Activated CD4-positive, alpha-beta memory T cell treated with anti-CD3 and anti-CD28 coated beads, Interleukin-2, amount 10 ng/mL, durations not matched to agents 7 days and 5 days (primary cell): ENCODE measurements at regions of chr1 and their contacts with region 1.

Region 1: GRCh38 chr1:67332653-67333529 is 25.2 kb downstream of the IL12RB2 start:
- DNase-seq: peak; percentile 48
- H3K4me3 Mint-ChIP-seq: peak overlapping the region; percentile 25
- H3K27ac Mint-ChIP-seq: peak overlapping the region; percentile 89
- H3K4me1 Mint-ChIP-seq: peaks cover 82% of the 10 kb centered on the region
- H3K27me3 Mint-ChIP-seq: no peaks in the 10 kb centered on the region

Region 2: DNA sequence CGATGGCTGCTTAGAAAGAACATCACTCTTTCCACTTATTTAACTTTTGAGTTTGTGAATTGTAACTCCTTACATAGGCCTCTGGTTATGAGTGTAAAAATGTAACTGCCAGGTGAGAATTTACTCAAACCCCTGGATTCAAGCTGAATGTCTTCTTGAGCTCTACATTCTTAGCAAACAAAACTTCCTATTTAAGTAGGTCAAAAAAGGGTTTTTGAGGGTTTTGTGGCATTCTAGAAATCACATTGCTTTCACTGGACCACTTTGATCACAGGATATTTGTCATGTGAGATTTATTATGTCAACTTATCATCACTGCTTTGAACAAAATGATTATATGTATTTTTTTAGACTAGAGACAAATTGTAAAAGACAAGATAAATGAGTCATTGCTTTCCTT is 160.9 kb before region 1 on chr1:
- CTCF ChIA-PET with region 1: no interaction called
- POLR2A ChIA-PET with region 1: interaction called, 11 read pairs
- DNase-seq: no peak
- H3K4me3 Mint-ChIP-seq: peak overlapping the region; percentile 55
- H3K27ac Mint-ChIP-seq: peak overlapping the region; percentile 82
- H3K4me1 Mint-ChIP-seq: peaks cover 68% of the 10 kb centered on the region
- H3K27me3 Mint-ChIP-seq: peaks cover 1% of the 10 kb centered on the region

Region 3: GRCh38 chr1:67250051-67250653 is 82.7 kb before region 1 on chr1:
- CTCF ChIA-PET with region 1: no interaction called
- POLR2A ChIA-PET with region 1: no interaction called
- DNase-seq: no peak
- H3K4me3 Mint-ChIP-seq: no peak overlapping the region
- H3K27ac Mint-ChIP-seq: no peak overlapping the region
- H3K4me1 Mint-ChIP-seq: no peaks in the 10 kb centered on the region
- H3K27me3 Mint-ChIP-seq: no peaks in the 10 kb centered on the region

Region 4: GRCh38 chr1:67307251-67308060 is 25.4 kb before region 1 on chr1 and contains the start of gene IL12RB2:
- CTCF ChIA-PET with region 1: interaction called, 3 read pairs
- POLR2A ChIA-PET with region 1: interaction called, 114 read pairs
- DNase-seq: peak; percentile 73
- H3K4me3 Mint-ChIP-seq: peak within 1 kb of the TSS; percentile 97
- H3K27ac Mint-ChIP-seq: peak within 1 kb of the TSS; percentile 94
- H3K4me1 Mint-ChIP-seq: peaks cover 72% of the 10 kb centered on the region
- H3K27me3 Mint-ChIP-seq: no peaks in the 10 kb centered on the region
- total RNA-seq, gene IL12RB2: 75.5 to 76.0 TPM

Region 5: DNA sequence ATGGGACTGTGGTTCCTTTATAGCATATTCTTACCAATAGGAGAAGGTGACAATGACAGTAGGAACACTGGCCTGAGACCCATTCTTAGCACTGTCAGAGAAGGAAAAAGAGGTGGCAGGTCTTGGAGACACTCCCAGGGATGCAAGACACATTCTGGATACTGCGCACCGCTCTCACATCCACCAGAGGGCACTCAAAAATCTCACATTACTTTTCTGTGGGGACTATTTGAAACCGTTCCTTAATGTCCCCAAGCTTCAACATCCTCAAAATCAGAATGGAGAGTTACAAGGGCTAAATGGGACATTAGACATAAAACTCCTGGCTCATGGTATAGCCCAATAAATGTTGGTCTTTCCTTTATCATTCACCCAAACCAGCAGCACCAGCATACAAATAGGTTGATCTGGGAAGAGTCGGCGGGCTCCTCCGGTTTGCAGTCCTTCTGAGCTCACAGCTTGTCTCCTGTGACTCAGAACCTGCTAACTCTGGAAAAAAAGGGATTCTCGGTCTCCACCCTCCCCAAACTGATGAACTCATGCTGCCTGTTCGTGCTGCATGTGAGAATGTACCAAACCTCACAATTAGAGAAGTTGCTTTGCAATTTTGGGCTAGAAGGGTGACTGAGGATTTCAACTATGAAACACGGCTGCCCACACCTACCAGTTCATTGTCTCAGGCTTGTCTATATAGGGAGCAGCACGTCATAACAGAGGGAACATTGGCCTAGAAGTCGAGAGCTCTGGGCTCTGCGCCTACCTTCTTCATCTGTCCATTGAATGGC is 15.0 kb after region 1 on chr1:
- CTCF ChIA-PET with region 1: interaction called, 32 read pairs
- POLR2A ChIA-PET with region 1: interaction called, 18 read pairs
- DNase-seq: no peak
- H3K4me3 Mint-ChIP-seq: no peak overlapping the region
- H3K27ac Mint-ChIP-seq: no peak overlapping the region
- H3K4me1 Mint-ChIP-seq: peaks cover 31% of the 10 kb centered on the region
- H3K27me3 Mint-ChIP-seq: no peaks in the 10 kb centered on the region

Region 6: GRCh38 chr1:67359592-67359991 is 26.7 kb after region 1 on chr1:
- CTCF ChIA-PET with region 1: no interaction called
- POLR2A ChIA-PET with region 1: no interaction called
- DNase-seq: no peak
- H3K4me3 Mint-ChIP-seq: no peak overlapping the region
- H3K27ac Mint-ChIP-seq: no peak overlapping the region
- H3K4me1 Mint-ChIP-seq: peaks cover 17% of the 10 kb centered on the region
- H3K27me3 Mint-ChIP-seq: no peaks in the 10 kb centered on the region